ENCODE measurements at regions of chr19 and their contacts with region 1.

Region 1: GRCh38 chr19:28466107-28467045 is 746.6 kb downstream of the UQCRFS1 start:
- DNase-seq: peak in 6 of 10 donors; percentile 34 to 90 (median 59)

Region 2: DNA sequence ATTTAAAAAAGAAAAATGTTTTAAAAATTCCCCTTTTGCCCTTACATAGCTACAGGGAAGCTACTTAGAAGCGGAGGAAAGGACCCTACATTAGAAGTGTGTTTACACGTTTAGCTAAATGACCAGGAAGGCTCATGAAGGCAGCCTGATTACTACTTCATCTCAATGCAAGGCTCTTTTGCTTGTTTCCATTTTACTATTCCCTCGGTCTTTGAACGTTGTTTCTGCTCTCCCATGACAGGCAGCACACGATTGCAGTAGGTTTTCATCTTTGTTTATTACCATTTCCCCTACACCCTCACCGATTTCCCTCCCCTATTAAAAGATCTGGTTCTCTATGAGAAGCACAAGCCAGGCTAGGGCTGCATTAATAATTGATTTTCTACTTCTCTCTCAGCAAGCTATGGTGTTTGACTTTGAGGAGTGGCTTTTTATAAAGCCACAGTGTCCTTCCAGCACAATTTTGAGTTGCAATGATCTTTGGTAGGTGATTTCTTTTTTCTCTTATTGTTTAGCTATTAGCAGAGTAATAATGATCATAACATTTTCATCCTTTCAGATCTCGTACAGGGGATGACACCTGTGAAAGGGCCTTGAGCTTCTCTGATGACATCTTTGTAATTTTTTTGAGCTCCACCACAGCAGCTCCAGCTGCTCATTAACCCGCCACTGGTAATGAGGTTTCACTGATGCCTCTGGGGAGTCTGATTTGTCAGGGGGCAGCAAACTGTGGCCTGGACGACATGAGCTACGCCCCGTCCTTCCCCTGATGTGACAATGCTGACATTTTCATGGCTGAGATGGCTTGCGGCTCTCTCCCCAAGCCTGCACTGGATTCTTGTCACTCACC is 76.2 kb after region 1 on chr19:
- intact Hi-C with region 1: no loop called
- DNase-seq: no peak

Region 3: DNA sequence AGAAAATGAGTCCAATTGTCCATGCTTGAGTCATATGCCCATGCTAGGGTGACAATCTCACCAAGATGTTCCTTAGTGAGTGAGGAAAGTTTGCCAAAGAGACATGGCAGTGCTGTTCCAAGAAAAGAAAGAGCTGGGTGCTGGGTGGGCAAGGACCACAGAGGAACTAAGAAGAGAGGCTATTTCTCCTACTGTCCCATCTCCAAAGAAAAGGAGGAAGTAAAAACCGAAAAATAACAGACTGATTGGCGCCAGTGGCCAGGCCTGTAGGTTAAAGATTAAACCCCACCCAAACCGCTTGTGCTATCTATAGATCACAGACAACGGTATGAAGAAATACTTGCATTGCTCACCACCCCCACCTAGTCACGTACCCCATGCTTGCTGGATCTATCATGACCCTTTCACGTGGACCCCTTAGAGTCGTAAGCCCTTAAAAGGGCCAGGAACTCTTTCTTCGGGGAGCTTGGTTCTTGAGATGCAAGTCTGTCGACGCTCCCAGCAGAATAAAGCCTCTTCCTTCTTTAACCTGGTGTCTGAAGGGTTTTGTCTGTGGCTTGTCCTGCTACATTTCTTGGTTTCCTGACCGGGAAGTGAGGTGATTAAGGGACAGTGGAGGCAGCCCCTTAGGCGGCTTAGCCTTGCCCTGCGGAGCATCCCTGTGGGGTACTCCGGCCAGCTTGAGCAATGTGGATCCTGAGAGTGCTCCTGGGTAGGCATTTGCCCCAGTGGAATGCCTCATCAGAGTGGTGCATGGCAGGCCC is 140.1 kb after region 1 on chr19:
- intact Hi-C with region 1: no loop called
- DNase-seq: no peak

Region 4: DNA sequence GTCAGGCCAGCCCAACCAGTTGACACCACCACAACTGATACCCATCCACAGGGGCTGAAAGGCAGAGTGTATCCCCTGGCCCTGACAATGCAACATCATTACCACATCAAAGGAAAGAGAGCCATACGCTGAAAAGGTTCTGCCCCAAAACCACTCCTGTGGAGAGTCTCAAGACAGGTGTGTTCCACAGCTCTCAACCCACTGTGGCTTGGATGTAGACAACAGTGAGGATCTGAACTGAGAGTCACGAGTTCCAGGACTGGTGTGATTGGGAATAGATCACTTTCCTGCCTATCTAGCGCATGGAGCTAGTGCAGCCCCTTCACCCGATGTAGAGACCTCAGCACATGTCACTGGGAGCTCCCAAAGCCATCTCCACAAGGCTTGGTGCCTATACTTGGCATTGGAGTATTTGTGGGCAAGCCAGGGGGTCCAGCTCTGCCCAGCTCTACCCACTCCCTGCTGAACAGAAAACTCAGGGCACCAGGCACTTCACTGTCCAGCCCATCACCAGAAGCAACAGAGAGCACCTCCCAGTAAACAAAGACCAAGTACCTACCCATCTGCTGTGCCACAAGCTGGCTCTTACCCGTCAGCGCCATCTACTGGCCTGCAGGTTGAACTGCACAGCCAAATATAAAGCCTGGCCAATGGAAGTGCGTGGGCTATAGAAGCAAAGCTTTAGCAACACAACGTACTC is 167.1 kb after region 1 on chr19:
- intact Hi-C with region 1: loop called (anchors 5 kb)
- DNase-seq: peak in 2 of 10 donors; percentile 16 to 35

Region 5: GRCh38 chr19:28710278-28710677 is 243.9 kb after region 1 on chr19:
- intact Hi-C with region 1: loop called (anchors 1 kb)
- DNase-seq: no peak

Region 6: DNA sequence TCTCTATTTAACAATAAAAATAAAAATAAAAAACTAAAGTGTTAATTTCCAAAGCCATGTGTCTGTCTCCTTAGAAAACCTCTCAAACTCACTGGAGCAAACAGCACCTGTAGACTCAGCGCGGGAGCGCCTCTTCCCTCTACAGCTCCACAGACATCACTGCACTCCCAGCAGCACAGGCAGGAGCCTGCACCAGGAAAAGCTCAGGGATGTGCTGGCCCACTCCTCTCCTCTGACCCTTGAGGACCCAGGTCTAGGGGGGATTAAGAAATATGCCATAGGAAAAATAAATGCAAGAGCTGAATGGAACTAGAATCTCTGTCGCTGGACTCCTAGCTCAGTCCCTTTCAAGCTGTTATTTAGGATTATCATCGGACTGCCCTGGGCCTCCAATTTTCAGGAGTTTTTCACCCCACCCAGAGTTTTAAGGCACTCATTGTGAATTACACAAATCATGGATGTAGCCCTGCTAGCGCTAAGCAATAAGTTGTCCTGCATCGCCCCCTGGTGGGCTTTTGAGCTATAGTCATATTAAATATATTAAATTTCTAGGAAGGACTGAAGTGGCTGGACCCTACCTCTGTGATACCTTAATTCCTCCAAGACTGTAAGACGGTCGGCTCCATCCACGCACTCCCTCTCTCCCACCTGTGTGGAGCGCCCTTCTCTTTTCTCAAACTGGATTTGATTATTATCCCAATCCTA is 412.6 kb after region 1 on chr19:
- intact Hi-C with region 1: loop called (anchors 5 kb)
- DNase-seq: peak; percentile 33 to 96 (median 78)

Region 7: DNA sequence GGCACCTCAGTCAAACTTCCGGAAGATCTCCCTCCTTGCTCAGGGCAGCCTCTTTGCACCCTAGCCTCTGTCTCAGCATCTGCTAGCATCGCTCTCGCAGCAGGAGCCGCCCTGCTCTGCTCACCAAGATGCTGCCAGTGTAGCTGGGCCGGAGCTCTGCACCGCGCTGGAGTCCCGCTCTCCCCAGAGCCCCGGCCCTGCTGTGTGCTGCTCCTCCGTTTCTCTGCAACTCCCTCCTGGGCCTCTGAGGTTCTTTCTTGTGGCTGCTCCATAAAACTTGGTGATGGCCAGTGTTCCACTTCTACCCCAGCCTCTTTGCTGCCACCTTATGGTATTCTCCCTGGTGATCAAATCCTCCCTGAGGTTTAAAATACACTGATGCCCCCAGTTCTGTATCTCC is 548.5 kb after region 1 on chr19:
- intact Hi-C with region 1: no loop called
- DNase-seq: no peak